A673 (cell line): ENCODE measurements at regions of chr2 and their contacts with region 1.

Region 1: DNA sequence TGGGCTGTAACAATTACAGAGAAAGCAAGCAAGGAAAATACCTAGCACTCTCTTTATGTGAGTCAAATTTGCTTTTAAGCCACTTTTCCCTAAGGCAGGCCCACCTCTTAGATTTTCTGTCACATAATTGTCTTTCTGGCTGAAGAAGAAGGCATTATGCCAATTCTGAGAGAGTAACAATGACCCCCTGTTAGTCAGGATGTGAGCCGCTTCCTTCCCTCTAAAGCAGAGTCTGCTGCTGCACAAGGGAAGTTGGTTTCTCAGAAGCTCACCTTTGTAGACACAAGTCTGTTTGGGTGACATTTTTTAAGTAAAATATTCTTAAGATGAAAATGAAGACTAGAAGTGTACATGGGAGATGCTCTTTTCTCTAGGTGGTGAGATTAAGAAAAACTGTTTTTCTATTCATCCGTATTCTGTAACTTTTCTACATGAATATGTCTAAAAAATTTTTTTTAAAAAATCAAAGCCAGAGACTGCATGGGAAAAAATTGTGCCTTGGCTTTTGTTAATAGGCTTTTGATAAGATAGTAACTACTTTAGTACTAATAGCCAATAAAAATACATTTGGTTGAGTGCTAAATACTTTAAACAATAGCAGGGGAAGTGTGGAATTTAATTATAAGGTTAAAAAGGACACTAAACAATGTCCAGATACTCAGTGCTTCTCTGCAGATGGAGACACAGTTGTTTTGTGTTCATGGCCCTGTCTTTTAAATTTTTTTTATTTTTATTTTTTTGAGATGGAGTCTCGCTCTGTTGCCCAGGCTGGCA is 33.4 kb upstream of the VPS54 start:
- DNase-seq: peak; percentile 88
- H3K4me3 ChIP-seq: no peak overlapping the region
- H3K27ac ChIP-seq: no peak overlapping the region
- H3K4me1 ChIP-seq: peaks cover 4% of the 10 kb centered on the region
- H3K27me3 ChIP-seq: no peaks in the 10 kb centered on the region
- CTCF ChIP-seq: no peak

Region 2: DNA sequence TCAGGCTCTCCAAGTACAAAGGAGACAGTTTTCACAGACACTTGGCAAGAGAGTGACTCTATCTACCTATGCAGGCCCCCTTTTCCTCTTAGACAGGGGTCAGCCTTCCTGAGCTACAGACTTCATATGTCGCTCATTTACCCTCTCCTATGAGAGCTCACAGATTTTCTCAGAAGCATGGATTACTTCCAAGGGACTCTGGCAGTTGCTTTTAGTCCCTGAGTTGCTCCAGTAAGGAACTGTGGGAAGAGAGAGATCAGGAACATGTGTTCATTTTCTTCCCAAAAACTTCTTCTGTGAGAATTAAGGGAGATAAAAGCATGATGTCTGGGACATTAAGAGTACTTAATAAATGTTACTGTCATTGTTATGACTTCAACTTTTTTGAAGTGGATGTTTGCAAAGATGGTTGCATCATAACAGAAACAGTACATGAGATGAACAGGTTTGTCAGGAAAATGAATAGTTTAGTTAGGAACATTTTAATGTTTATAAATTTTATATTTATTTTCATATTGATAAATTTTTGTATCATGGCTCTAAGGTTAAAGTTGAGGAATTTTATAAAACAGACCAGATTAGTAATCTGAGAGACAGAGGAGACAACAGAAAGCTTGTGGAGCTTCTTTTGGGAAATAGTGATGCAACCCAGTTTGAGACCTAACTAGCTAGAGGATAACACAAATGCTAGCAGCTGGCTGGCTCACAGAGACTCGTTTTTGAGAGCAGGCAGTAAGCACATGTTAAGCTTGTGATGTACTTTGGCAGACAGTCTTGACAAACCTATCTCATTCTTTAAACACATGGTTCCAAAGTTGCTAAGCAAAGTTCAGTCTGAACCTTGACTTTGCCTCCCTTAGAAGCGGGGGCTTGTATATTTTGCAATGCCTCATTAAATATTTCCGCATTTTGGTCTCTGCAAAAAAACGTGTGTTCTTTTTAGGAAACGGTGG is 232.6 kb before region 1 on chr2:
- CTCF ChIA-PET with region 1: no interaction called
- POLR2A ChIA-PET with region 1: no interaction called
- intact Hi-C with region 1: no loop called
- DNase-seq: no peak
- H3K4me3 ChIP-seq: no peak overlapping the region
- H3K27ac ChIP-seq: no peak overlapping the region
- H3K4me1 ChIP-seq: no peaks in the 10 kb centered on the region
- H3K27me3 ChIP-seq: no peaks in the 10 kb centered on the region
- CTCF ChIP-seq: no peak

Region 3: DNA sequence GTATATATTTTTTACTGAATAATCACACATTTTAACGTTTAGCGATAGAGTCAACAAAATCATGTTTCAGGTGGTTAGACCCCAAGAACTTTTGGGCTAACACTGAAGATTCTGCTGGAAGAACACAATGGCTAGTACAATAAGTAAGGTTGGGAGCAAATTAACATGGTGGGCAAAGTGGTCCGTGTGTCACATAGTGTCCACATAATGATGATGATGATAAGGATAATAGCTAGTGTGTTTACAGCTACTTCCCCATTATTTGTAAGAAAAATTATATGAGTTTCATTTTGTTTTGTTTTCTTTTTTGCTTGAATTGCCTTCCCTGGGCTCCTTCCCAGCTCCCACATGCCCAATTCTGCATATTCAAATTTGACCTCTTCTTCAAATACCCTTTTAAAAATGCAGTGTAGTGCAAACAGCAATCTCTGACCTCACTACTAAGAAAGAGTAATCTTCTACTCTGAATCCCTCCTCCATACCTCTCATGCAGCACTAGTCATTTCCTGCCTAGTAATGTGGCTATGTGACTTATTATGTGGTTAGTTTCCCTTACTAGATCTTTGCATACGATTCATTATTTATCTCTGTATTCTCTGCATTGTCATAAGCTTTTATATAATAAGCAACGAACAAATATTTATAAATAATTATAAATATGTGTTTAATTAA is 16.5 kb before region 1 on chr2:
- CTCF ChIA-PET with region 1: interaction called, 11 read pairs
- POLR2A ChIA-PET with region 1: no interaction called
- intact Hi-C with region 1: no loop called
- DNase-seq: no peak
- H3K4me3 ChIP-seq: no peak overlapping the region
- H3K27ac ChIP-seq: no peak overlapping the region
- H3K4me1 ChIP-seq: no peaks in the 10 kb centered on the region
- H3K27me3 ChIP-seq: no peaks in the 10 kb centered on the region
- CTCF ChIP-seq: no peak

Region 4: DNA sequence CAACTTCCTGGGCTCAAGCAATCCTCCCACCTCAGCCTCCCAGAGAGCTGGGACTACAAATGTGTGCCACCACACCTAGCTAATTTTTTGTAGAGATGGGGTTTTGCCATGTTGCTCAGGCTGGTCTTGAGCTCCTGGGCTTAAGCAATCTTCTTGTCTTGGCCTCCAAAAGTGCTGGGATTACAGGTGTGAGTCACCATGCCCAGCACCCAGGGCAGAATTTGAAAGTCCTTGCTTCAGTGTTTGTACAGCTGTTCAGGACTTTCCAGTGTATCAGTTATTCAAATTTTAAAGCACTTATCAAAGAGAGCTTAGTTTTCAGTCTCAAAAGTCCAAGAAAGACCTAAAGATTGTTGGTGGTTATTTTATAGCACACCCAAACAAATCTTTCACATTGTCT is 10.2 kb after region 1 on chr2:
- CTCF ChIA-PET with region 1: no interaction called
- POLR2A ChIA-PET with region 1: no interaction called
- intact Hi-C with region 1: no loop called
- DNase-seq: no peak
- H3K4me3 ChIP-seq: no peak overlapping the region
- H3K27ac ChIP-seq: no peak overlapping the region
- H3K4me1 ChIP-seq: peaks cover 9% of the 10 kb centered on the region
- H3K27me3 ChIP-seq: no peaks in the 10 kb centered on the region
- CTCF ChIP-seq: no peak

Region 5: GRCh38 chr2:64311948-64312621 is 259.4 kb after region 1 on chr2:
- CTCF ChIA-PET with region 1: interaction called, 18 read pairs
- POLR2A ChIA-PET with region 1: no interaction called
- intact Hi-C with region 1: loop called (anchors 1 kb)
- DNase-seq: peak; percentile 96
- H3K4me3 ChIP-seq: peak overlapping the region; percentile 9
- H3K27ac ChIP-seq: peak overlapping the region; percentile 81
- H3K4me1 ChIP-seq: peaks cover 30% of the 10 kb centered on the region
- H3K27me3 ChIP-seq: no peaks in the 10 kb centered on the region
- CTCF ChIP-seq: peak; percentile 72

Region 6: DNA sequence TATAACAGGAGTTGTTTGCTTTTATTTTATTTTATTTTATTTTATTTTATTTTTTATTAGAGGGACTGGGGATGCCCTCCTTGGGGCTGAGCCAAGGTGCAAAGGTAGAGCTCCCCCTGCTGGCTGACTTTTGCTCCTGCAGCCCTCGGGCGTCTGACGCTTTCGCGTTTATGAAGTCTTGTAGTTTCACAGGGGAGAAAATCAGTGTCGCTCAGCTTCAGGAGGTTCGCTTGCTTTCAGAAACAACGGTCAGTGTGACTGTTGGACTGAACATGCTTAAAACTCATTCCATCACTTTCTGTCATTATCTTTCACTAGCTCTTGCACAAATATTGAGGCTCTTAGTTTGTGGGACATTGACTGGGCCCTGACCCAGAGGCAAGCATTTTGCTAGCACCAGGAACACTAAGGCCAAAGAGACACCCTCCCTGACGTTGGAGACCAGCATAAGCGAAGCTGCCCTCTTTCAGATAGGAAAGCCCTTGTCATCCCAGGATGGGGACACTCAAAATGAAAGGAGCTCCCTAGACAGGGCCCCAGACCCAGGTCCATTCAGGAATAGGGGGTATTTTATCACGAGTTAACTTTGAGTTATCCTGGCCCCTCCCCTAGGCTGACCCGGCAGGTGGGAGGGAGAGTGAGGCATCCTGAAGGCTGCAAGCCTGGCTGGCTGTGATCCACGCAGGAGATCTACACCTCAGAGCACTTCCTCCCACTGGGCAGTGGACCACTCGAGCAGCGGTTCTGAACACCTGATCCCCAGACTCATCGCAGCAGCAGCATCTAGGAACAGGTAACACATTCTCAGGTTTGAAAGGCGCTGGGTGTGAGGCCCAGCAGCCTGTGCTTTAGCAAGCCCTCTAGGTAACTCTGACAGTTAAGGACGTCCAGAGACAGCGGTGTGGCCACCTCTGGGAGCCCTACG is 435.7 kb after region 1 on chr2:
- CTCF ChIA-PET with region 1: interaction called, 9 read pairs
- POLR2A ChIA-PET with region 1: no interaction called
- intact Hi-C with region 1: loop called (anchors 2 kb)
- DNase-seq: peak; percentile 73
- H3K4me3 ChIP-seq: no peak overlapping the region
- H3K27ac ChIP-seq: no peak overlapping the region
- H3K4me1 ChIP-seq: no peaks in the 10 kb centered on the region
- H3K27me3 ChIP-seq: no peaks in the 10 kb centered on the region
- CTCF ChIP-seq: peak; percentile 94